ENCODE measurements at regions of chr10 and their contacts with region 1.

Region 1: DNA sequence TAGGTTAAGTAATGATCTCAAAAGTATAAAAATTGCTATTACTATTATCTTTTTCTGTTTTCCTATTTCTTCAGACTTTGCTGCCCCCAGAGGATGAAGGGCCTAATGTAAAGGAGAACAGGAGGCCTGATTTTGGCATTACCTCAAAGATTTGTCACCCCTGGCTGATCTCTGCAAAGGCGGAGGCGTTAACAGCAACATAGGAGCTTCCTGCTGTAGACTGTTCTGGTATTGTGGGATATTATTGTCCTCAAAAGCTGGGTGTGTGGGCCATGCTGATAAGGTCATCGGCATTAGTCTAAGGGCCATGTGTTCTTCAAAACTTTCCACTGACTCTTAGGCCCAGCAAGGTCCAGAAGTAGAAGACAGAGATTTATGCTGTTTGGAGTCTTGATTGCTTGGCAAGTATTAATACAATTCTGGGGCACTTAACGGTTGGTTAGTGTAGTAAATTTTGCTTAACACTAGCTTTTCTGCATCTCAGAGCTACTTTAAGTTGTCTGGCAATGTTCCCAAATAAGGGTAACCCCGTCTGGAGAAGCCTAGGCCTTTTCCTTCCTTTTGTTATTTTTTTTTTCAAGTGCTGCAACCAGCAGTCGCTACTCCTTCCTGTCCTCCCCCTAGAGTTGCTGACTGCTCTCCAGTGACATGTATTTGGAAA is 14.0 kb upstream of the ENTPD1 start:
- DNase-seq: peak; percentile 98
- H3K4me3 ChIP-seq: peak overlapping the region in 1 of 3 experiments; percentile 1
- H3K27ac ChIP-seq: peak overlapping the region; percentile 75
- H3K4me1 ChIP-seq: peaks cover 26% of the 10 kb centered on the region
- H3K27me3 ChIP-seq: no peaks in the 10 kb centered on the region
- CTCF ChIP-seq: peak; percentile 41 to 58
- POLR2A ChIP-seq: no peak

Region 2: DNA sequence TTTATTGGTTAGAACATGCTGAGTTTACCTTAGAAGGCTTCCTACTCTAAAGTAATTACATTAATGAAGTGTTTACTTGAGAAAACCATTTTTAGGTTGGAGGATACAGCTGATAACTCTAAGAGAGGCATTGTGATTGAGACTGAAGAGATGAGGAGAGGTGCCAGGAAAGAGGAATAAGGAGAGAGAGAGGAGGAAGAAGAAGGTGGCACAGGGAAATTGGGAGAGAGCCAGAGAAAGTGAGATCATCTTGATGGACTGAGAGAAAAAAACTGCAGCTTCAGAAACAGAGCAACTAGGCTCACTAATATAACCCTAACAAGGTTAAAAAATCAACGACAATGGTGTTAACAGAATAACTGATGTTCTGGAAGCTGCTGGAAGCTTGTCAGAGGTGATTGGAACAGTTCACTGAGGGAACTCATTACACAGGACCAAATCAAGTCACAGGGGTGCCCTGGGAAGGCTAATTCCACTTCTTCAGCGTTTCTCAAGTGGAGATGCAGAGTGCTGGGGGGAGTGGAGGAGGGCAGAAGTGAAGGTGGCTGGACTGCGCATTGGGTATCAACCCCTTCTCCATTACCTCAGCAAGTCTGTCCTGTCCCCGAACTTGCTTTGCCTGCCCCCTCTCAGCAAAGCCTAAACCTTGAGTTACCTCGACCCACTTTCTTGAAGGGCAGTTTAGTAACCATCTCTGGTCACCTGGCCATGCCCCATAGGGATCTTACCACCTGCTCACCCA is 173.9 kb before region 1 on chr10:
- CTCF ChIA-PET with region 1: no interaction called
- POLR2A ChIA-PET with region 1: no interaction called
- dilution Hi-C with region 1: no loop called
- intact Hi-C with region 1: no loop called
- DNase-seq: peak; percentile 21
- H3K4me3 ChIP-seq: no peak overlapping the region
- H3K27ac ChIP-seq: no peak overlapping the region
- H3K4me1 ChIP-seq: no peaks in the 10 kb centered on the region
- H3K27me3 ChIP-seq: peaks cover 0 to 8% of the 10 kb centered on the region in 2 experiments
- CTCF ChIP-seq: no peak
- POLR2A ChIP-seq: no peak

Region 3: DNA sequence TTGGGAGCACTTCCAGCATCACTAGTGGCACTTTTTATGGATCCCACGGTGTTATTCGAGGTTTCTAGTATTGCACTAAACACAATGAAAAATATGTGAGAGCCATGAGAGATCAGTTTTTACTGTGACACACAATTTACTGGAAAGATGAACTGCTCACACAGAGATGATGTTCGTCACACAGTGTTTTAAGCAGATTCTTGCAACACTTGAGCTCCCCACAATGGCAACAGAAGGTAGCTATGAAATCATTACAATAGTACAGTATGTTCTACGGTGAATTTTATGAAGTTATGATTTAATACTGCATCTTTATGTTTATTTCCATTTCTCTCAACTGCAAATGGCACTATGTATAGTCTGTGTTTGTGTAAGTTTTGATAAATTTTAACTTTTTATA is 13.4 kb before region 1 on chr10:
- CTCF ChIA-PET with region 1: interaction called, 18 read pairs
- POLR2A ChIA-PET with region 1: no interaction called
- dilution Hi-C with region 1: no loop called
- intact Hi-C with region 1: loop called (anchors 1 kb)
- DNase-seq: peak; percentile 54
- H3K4me3 ChIP-seq: no peak overlapping the region
- H3K27ac ChIP-seq: no peak overlapping the region
- H3K4me1 ChIP-seq: peaks cover 15% of the 10 kb centered on the region
- H3K27me3 ChIP-seq: no peaks in the 10 kb centered on the region
- CTCF ChIP-seq: no peak
- POLR2A ChIP-seq: no peak

Region 4: GRCh38 chr10:95755511-95756004 is 13.6 kb after region 1 on chr10:
- CTCF ChIA-PET with region 1: interaction called, 4 read pairs
- POLR2A ChIA-PET with region 1: no interaction called
- dilution Hi-C with region 1: no loop called
- intact Hi-C with region 1: loop called (anchors 2 kb)
- DNase-seq: peak; percentile 55
- H3K4me3 ChIP-seq: peak overlapping the region; percentile 13 to 31 (median 25)
- H3K27ac ChIP-seq: no peak overlapping the region
- H3K4me1 ChIP-seq: peaks cover 24% of the 10 kb centered on the region
- H3K27me3 ChIP-seq: no peaks in the 10 kb centered on the region
- CTCF ChIP-seq: no peak
- POLR2A ChIP-seq: no peak

Region 5: GRCh38 chr10:95761939-95762492 is 20.1 kb after region 1 on chr10:
- CTCF ChIA-PET with region 1: interaction called, 3 read pairs
- POLR2A ChIA-PET with region 1: no interaction called
- dilution Hi-C with region 1: no loop called
- intact Hi-C with region 1: loop called (anchors 1 kb)
- DNase-seq: peak; percentile 79
- H3K4me3 ChIP-seq: no peak overlapping the region
- H3K27ac ChIP-seq: peak overlapping the region; percentile 16
- H3K4me1 ChIP-seq: peaks cover 29% of the 10 kb centered on the region
- H3K27me3 ChIP-seq: no peaks in the 10 kb centered on the region
- CTCF ChIP-seq: no peak
- POLR2A ChIP-seq: no peak

Region 6: GRCh38 chr10:95792874-95793285 is 50.9 kb after region 1 on chr10:
- CTCF ChIA-PET with region 1: interaction called, 3 read pairs
- POLR2A ChIA-PET with region 1: no interaction called
- dilution Hi-C with region 1: no loop called
- intact Hi-C with region 1: loop called (anchors 2 kb)
- DNase-seq: peak; percentile 89
- H3K4me3 ChIP-seq: no peak overlapping the region
- H3K27ac ChIP-seq: peak overlapping the region; percentile 29
- H3K4me1 ChIP-seq: peaks cover 40% of the 10 kb centered on the region
- H3K27me3 ChIP-seq: no peaks in the 10 kb centered on the region
- CTCF ChIP-seq: no peak
- POLR2A ChIP-seq: no peak

Region 7: DNA sequence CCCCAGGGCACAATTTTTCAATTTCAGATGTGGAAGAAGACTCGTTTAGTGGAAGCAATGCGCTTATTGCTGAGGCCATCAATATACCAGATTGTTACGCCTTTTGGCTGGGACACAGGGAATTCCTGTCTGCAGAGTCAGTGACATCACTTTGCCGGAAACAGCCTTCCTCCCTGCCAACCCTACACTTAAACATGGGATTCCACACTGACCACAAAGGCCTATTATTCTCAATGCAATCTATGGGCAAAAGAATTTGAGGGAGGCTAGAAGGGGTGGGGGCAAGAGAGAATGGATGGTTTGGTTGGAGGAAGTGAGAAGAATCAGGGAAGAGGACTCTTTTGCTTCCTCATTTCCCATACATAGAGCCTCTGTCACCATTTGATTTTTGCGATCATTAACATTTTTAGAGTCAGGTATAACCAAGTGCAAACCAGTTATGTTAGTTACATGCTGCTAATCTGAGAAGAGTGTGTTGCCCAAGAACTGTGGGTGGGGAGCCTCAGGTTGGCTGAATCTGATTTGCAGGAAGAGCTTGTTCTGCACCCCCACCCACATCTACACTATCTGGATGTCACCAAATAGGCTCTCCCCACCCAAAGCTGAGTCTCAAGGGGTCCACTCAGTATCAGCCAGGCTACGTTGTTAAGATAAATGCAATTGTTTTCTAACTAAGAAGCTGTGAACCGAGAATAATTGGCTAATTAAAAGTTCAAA is 72.2 kb after region 1 on chr10:
- CTCF ChIA-PET with region 1: interaction called, 4 read pairs
- POLR2A ChIA-PET with region 1: no interaction called
- dilution Hi-C with region 1: no loop called
- intact Hi-C with region 1: loop called (anchors 1 kb)
- DNase-seq: peak; percentile 76
- H3K4me3 ChIP-seq: no peak overlapping the region
- H3K27ac ChIP-seq: peak overlapping the region; percentile 41
- H3K4me1 ChIP-seq: peaks cover 46% of the 10 kb centered on the region
- H3K27me3 ChIP-seq: no peaks in the 10 kb centered on the region
- CTCF ChIP-seq: no peak
- POLR2A ChIP-seq: no peak

Region 8: GRCh38 chr10:95907456-95908253 is 165.7 kb after region 1 on chr10 and contains the start of gene CC2D2B:
- CTCF ChIA-PET with region 1: no interaction called
- POLR2A ChIA-PET with region 1: no interaction called
- dilution Hi-C with region 1: no loop called
- intact Hi-C with region 1: loop called (anchors 5 kb)
- DNase-seq: peak; percentile 89
- H3K4me3 ChIP-seq: peak within 1 kb of the TSS; percentile 15 to 80 (median 68)
- H3K27ac ChIP-seq: peak within 1 kb of the TSS; percentile 16
- H3K4me1 ChIP-seq: peaks cover 4% of the 10 kb centered on the region
- H3K27me3 ChIP-seq: peaks cover 0 to 1% of the 10 kb centered on the region in 2 experiments
- CTCF ChIP-seq: peak; percentile 22
- POLR2A ChIP-seq: peak; percentile 77
- total RNA-seq, gene CC2D2B: 0.53 and 1.2 TPM in 2 replicates

Region 9: DNA sequence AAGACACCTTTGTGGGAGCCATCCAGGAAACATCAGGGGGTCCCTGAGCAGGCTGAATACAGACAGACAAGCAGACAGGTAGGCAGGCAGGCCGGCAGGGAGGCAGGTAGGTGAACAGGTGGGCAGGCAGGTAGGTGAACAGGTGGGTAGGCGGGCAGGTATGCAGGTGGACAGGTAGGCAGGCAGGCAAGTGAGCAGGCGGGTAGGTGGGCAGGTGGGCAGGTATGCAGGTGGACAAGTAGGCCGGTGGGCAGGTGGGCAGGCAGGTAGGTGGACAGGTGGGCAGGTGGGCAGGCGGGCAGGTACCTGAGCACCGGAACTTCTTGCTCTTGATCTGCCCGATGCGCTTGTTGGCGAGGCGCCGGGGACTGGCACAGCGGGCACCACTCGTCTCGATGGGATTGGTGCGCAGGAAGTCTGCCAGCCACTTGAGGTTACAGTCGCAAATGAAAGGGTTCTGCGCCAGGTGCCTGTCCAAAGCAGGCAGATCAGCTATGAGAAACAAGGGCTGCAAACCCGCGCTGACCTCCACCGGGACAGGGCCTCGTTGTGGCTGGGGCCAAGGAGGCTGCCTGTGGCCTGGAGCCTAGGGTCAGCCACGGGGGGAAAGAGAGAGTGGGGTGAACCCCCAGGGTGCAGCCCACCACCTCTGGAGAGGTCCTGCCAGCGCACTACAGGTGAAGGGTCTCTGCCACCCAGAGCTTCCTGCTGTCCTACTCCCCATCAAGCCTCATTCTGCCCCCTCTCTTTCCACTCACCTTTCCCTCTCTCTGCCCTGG is 1306.9 kb after region 1 on chr10:
- CTCF ChIA-PET with region 1: no interaction called
- POLR2A ChIA-PET with region 1: no interaction called
- dilution Hi-C with region 1: no loop called
- intact Hi-C with region 1: no loop called
- DNase-seq: no peak
- H3K4me3 ChIP-seq: no peak overlapping the region
- H3K27ac ChIP-seq: no peak overlapping the region
- H3K4me1 ChIP-seq: no peaks in the 10 kb centered on the region
- H3K27me3 ChIP-seq: peaks cover 0 to 2% of the 10 kb centered on the region in 2 experiments
- CTCF ChIP-seq: no peak
- POLR2A ChIP-seq: no peak